Heart left ventricle (tissue), 16 donors: ENCODE measurements at regions of chr19 and their contacts with region 1.

Region 1: GRCh38 chr19:5680437-5681368 is at the starts of genes HSD11B1L and MICOS13:
- DNase-seq: peak; percentile 99 to 100 (median 99)
- ATAC-seq: peak; percentile 93 to 97 (median 94)
- H3K4me3 ChIP-seq: peak within 1 kb of the TSS; percentile 61 to 99 (median 78)
- H3K27ac ChIP-seq: peak within 1 kb of the TSS; percentile 74 to 96 (median 90)
- H3K4me1 ChIP-seq: peaks cover 0 to 30% (median 15%) of the 10 kb centered on the region in 12 donors
- H3K27me3 ChIP-seq: no peaks in the 10 kb centered on the region
- CTCF ChIP-seq: no peak
- POLR2A ChIP-seq: peak in 1 of 2 donors; percentile 77
- total RNA-seq, gene HSD11B1L: 3.7 to 14.4 (median 5.2) TPM
- total RNA-seq, gene MICOS13: 103 to 149 (median 123) TPM

Region 2: DNA sequence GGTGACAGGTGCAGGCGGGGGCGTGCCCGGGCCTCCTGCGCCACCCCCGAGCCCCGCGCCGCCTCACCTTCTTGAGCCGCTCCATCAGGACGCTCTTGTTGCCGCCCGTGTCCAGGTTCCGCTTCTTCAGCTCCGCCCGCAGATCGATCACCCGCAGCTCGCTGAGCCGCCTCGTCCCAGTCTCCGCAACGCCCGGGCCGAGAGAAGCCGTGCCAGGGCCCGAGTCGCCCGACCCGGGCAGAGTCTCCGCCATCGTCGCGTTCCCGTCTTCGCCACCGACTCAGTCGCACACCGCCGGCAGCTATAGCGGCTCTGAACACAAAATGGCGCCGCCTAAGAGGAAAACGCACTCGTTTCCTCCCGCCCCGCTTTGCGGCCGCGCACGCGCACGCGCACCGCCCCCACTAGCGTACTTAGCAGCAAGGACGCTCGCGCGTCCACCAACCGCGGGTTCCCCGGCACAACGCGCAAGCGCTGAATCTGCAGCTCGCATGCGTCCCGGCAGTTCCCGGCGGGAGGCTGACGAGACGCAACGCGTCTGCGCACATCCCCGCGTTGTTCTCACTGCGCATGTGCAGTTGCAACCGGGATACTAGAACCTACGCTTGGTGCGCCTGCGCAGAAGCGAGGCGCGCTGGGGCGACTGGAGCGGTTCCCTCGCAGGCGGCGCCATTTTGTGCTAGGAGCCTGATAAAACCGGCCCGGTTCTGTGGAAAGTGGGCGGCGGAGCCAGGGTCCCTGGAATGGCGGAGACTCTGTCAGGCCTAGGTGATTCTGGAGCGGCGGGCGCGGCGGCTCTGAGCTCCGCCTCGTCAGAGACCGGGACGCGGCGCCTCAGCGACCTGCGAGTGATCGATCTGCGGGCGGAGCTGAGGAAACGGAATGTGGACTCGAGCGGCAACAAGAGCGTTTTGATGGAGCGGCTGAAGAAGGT is 58.0 kb before region 1 on chr19 and contains the starts of genes SAFB and SAFB2:
- intact Hi-C with region 1: loop called in 5 of 10 experiments (anchors 1 to 10 kb)
- DNase-seq: peak; percentile 99 to 100 (median 100)
- ATAC-seq: peak; percentile 94 to 98 (median 96)
- H3K4me3 ChIP-seq: peak within 1 kb of the TSS; percentile 84 to 99 (median 96)
- H3K27ac ChIP-seq: peak within 1 kb of the TSS; percentile 93 to 98 (median 94)
- H3K4me1 ChIP-seq: peaks cover 14 to 81% (median 69%) of the 10 kb centered on the region in 12 donors
- H3K27me3 ChIP-seq: no peaks in the 10 kb centered on the region
- CTCF ChIP-seq: peak in 1 of 12 donors; percentile 15
- POLR2A ChIP-seq: peak; percentile 70 to 82
- total RNA-seq, gene SAFB: 22.3 to 59.6 (median 48.0) TPM
- total RNA-seq, gene SAFB2: 14.2 to 56.7 (median 44.2) TPM

Region 3: GRCh38 chr19:5719961-5720790 is 39.5 kb after region 1 on chr19 and contains the starts of genes CATSPERD and LONP1:
- intact Hi-C with region 1: loop called in 1 of 10 experiments (anchors 1 kb)
- DNase-seq: peak; percentile 98 to 99 (median 99)
- ATAC-seq: peak; percentile 97 to 98 (median 98)
- H3K4me3 ChIP-seq: peak within 1 kb of the TSS; percentile 73 to 99 (median 88)
- H3K27ac ChIP-seq: peak within 1 kb of the TSS; percentile 56 to 98 (median 94)
- H3K4me1 ChIP-seq: peaks cover 2 to 38% (median 22%) of the 10 kb centered on the region in 12 donors
- H3K27me3 ChIP-seq: no peaks in the 10 kb centered on the region
- CTCF ChIP-seq: peak; percentile 76 to 99 (median 93)
- POLR2A ChIP-seq: peak in 1 of 2 donors; percentile 46
- total RNA-seq, gene CATSPERD: not detected
- total RNA-seq, gene LONP1: 61.2 to 108 (median 88.6) TPM